Left ventricle myocardium superior (tissue), 1 donor: ENCODE measurements at regions of chr5 and their contacts with region 1.

Region 1: DNA sequence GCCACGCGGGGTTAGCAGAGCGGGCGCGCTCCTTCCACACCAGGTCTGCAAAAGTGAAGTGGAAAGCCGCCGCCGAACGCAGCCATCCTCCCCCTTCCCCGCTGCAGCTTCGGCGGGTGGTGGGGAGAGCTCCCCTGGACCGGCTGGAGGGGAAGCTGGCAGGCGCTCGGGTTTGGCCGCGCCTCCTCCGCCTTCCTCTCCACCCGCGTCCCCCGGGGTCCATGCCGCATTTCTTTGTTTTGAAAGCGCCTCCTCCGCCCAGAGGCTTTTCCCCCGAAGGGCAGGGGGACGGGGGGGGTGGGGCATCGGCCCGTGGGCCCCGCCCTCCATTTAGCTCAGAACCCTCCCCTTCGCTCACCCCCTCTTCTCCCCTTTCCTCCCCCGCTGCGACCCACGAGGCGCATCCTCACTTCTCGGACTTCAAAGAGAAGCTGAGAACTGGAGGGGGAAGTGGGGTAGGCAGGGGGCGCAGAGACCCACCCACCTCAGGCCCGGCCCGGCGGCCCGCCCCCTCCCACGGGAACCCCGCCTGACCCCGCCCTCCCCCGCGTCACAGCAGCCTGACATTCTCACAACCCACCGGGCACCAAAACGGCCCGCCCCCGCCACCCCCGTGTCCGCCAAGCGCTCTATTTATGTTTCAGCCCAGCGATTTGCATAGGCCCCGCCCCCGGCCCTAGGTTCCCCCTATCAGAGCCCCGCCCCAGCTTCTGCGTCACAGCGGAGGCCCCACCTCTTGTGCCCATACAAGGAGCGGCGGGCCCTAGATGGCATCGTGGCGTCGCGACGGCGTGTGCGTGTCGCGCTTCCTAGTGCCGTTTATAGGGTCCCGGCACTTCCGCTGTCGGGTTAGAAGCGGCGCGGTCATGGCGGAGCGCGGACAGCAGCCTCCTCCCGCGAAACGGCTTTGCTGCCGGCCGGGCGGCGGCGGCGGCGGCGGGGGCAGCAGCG is at the start of gene ZSWIM6:
- DNase-seq: peak; percentile 100
- ATAC-seq: peak; percentile 93
- total RNA-seq, gene ZSWIM6: 8.0 TPM

Region 2: DNA sequence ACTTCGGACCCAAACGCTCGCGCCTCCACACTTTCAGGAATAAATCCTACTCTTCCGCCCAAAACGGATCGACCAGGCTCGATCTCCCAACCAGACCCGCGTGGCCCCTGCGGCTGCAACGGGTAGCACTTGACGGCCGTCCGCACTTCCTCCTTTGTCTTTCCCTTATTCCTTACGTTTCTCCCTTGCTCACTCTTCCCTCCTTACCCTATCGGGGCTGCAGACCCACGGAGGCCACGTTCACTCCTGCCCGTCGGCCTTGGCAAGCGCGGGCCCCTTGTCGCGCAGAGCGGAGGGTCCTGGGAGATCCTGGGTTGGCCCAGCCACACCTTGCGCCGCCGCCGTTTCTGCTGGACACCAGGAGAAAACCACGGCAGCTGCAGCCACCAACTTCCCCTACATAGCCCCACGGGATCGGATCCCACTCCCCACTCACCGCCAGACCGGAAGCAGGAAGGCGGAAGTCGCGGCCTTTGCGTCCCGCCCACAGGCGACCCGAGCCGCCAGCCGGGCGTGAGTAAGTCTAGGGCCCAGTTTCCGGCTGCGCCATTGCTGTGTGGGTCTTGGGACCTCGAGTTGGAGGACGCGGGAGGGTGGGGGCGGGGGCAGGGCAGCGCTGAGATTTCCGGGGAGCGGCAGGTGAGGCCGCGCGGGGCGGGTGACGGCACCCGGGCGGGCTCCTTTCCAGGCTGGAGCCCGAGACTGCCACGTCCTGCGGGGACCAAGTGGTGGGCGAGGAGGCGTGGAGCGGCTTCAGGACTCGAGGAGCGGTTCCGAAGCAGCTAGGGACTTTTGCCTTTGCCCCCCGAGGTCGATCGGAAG is 169.5 kb before region 1 on chr5 and contains the start of gene SMIM15:
- intact Hi-C with region 1: loop called (anchors 10 kb)
- DNase-seq: peak; percentile 94
- ATAC-seq: peak; percentile 99
- total RNA-seq, gene SMIM15: 18.3 TPM

Region 3: GRCh38 chr5:61290791-61291210 is 40.9 kb before region 1 on chr5:
- intact Hi-C with region 1: no loop called
- DNase-seq: no peak
- ATAC-seq: no peak